HepG2 (cell line): ENCODE measurements at regions of chr19 and their contacts with region 1.

Region 1: GRCh38 chr19:40633207-40633606 is 32.0 kb downstream of the LTBP4 start:
- DNase-seq: peak; percentile 25
- ATAC-seq: no peak
- H3K4me3 ChIP-seq: no peak overlapping the region
- H3K27ac ChIP-seq: no peak overlapping the region
- H3K4me1 ChIP-seq: no peaks in the 10 kb centered on the region
- H3K27me3 ChIP-seq: peaks cover 1 to 14% of the 10 kb centered on the region in 2 experiments; a peak in 3 of 5 replicates
- CTCF ChIP-seq: no peak
- EP300 ChIP-seq: no peak
- POLR2A ChIP-seq: no peak
- RAD21 ChIP-seq: no peak

Region 2: DNA sequence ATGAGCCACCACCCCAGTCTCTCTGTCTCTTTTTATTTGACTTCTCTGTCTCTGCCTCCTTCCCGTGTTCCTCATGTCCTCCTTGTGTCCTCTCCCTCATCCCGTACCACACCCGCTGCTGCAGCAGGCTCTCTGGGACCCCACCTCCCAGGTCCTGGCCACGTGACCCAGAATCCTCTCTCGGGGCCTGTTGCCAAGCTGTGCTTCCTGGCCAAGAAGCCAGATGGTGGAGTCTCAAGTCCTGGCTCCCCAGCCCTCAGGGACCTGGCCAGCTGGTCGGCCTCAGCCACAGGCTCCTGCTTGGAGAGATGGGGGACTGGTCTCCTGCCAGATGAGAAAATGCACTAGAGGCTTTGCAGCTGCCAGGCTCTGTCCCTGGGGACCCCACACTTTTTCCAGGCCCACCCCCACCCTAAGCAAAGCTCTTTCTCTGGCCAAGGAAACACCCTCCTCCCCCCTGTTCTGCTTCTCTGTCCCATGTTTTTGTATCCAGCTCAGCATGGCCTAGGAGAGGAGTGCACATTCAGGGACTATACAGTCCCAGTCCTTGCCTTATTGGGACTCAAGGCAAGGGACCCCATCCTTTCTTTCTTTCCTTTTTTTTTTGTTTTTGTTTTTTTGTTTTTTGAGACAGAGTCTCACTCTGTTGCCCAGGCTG is 90.9 kb before region 1 on chr19:
- CTCF ChIA-PET with region 1: interaction called, 29 read pairs
- POLR2A ChIA-PET with region 1: no interaction called
- in situ Hi-C with region 1: no loop called
- intact Hi-C with region 1: loop called (anchors 10 kb)
- DNase-seq: no peak
- ATAC-seq: no peak
- H3K4me3 ChIP-seq: no peak overlapping the region
- H3K27ac ChIP-seq: no peak overlapping the region
- H3K4me1 ChIP-seq: peaks cover 4% of the 10 kb centered on the region; the same call in 1 of the 2 replicates
- H3K27me3 ChIP-seq: peaks cover 1 to 3% of the 10 kb centered on the region in 2 experiments; a peak in 3 of 5 replicates
- CTCF ChIP-seq: no peak
- EP300 ChIP-seq: no peak
- POLR2A ChIP-seq: no peak
- RAD21 ChIP-seq: no peak

Region 3: DNA sequence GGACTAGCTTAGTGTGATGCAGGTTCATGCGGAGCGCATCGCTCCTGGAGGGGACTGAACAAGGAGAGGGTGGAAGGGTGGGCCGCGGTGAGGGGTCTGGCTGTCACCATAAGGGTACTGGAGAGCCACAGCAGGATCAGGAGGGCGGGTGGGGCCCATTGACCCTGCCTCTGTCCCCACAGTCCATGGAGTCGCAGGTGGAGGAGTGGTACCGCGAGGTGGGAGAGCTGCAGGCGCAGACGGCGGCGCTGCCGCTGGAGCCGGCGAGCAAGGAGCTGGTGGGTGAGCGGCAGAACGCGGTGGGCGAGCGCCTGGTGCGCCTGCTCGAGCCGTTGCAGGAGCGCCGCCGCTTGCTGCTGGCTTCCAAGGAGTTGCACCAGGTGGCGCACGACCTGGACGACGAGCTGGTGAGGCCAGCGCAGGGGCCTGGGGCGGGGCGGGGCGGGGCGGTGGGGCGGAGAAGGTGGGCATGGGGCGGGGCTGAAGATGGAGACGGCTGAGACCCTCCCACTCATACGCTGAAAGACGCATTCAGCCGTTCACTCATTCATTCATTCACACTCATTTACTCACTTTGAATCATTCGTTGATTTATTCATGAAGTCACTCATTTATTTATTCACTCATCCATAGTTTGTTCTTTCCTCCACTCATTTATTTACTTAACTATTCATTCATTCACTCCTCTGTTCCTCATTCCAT is 84.0 kb before region 1 on chr19:
- CTCF ChIA-PET with region 1: interaction called, 20 read pairs
- POLR2A ChIA-PET with region 1: no interaction called
- in situ Hi-C with region 1: no loop called
- intact Hi-C with region 1: loop called (anchors 10 kb)
- DNase-seq: peak; percentile 49
- ATAC-seq: peak; percentile 95
- H3K4me3 ChIP-seq: peak overlapping the region in 1 of 3 experiments; percentile 42; a peak in 1 of 6 replicates
- H3K27ac ChIP-seq: no peak overlapping the region
- H3K4me1 ChIP-seq: peaks cover 14% of the 10 kb centered on the region
- H3K27me3 ChIP-seq: peaks cover 2 to 14% of the 10 kb centered on the region in 2 experiments; a peak in 4 of 5 replicates
- CTCF ChIP-seq: peak; percentile 77
- EP300 ChIP-seq: no peak
- POLR2A ChIP-seq: no peak
- RAD21 ChIP-seq: peak; percentile 35; the same call in 1 of the 2 replicates

Region 4: DNA sequence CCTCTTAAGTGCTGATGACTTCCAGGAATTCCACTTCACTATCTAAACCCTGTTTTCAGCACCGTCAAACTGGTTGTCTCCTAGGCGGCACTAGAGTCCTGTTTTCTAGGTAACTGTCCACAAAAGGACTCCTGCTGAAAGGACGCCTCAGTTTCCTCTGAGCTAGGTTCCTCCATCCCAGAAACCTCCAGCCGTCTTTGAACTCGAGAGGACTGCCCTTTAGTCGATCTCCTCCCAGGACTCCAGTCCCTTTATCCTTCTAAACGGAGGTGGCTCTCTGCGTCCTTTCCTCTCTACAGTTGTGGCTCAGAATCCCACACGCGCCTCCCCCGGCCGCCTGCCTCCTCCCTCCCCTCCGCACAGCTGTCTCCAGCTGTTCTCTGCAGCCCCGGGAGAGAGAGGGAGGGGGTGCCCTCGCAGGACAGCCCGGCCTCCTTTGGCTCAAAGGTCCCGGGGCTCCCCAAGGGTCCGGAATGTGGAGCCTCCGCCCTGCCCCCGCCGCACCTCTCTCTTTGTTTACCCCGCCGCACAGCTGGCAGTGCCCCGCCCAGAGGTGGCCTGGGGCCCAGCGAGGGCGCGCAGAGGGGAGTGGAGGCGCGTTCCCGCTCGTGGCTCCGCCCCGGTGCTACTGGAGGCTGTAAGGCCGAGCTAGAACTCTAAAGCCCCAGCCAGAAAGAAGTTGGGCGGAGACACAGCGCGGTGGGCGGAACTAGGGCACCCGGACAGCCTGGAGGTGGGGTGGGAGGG is 29.6 kb before region 1 on chr19:
- CTCF ChIA-PET with region 1: interaction called, 37 read pairs
- POLR2A ChIA-PET with region 1: interaction called, 3 read pairs
- in situ Hi-C with region 1: no loop called
- intact Hi-C with region 1: no loop called
- DNase-seq: peak; percentile 96
- ATAC-seq: peak; percentile 79
- H3K4me3 ChIP-seq: peak overlapping the region; percentile 9 to 63 (median 39); a peak in 4 of 6 replicates
- H3K27ac ChIP-seq: peak overlapping the region; percentile 39
- H3K4me1 ChIP-seq: peaks cover 73% of the 10 kb centered on the region
- H3K27me3 ChIP-seq: peaks cover 6 to 62% of the 10 kb centered on the region in 2 experiments; a peak in 3 of 5 replicates
- CTCF ChIP-seq: peak; percentile 39; the same call in 1 of the 2 replicates
- EP300 ChIP-seq: peak; percentile 52 to 74; a peak in 2 of 4 replicates
- POLR2A ChIP-seq: no peak
- RAD21 ChIP-seq: peak; percentile 45

Region 5: GRCh38 chr19:40858109-40858508 is 224.9 kb after region 1 on chr19:
- CTCF ChIA-PET with region 1: no interaction called
- POLR2A ChIA-PET with region 1: no interaction called
- in situ Hi-C with region 1: no loop called
- intact Hi-C with region 1: no loop called
- DNase-seq: no peak
- ATAC-seq: no peak
- H3K4me3 ChIP-seq: no peak overlapping the region
- H3K27ac ChIP-seq: no peak overlapping the region
- H3K4me1 ChIP-seq: no peaks in the 10 kb centered on the region
- H3K27me3 ChIP-seq: no peaks in the 10 kb centered on the region
- CTCF ChIP-seq: no peak
- EP300 ChIP-seq: no peak
- POLR2A ChIP-seq: no peak
- RAD21 ChIP-seq: no peak